SK-N-SH (cell line): ENCODE measurements at regions of chr10 and their contacts with region 1.

Region 1: GRCh38 chr10:127853868-127854768 is 38.6 kb downstream of the CLRN3 start:
- DNase-seq: peak; percentile 86
- H3K4me3 ChIP-seq: no peak overlapping the region
- H3K27ac ChIP-seq: no peak overlapping the region
- H3K4me1 ChIP-seq: no peaks in the 10 kb centered on the region; a peak in 1 of 4 replicates
- H3K27me3 ChIP-seq: no peaks in the 10 kb centered on the region
- CTCF ChIP-seq: peak; percentile 84
- EP300 ChIP-seq: no peak
- RAD21 ChIP-seq: peak; percentile 95

Region 2: DNA sequence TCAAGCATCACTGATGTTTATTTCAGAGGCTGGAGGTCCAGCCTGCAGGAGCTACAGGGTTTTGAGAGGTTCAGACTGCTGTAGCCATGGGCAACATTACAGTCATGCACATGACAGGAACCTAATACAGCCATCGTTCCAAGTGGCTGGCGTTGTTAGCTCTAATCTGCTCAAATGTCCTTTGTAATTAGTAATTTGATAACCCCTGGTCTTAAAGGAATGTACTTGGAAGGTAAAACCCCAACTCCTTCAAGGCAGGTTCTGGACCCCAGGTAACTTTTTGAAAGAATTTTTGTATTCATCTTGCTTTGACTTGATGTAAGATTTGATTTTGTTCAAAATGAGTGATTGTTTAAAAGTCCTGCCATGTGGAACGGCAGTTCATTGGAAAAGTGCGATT is 151.8 kb before region 1 on chr10:
- CTCF ChIA-PET with region 1: interaction called, 14 read pairs
- POLR2A ChIA-PET with region 1: no interaction called
- DNase-seq: no peak
- H3K4me3 ChIP-seq: no peak overlapping the region
- H3K27ac ChIP-seq: no peak overlapping the region
- H3K4me1 ChIP-seq: no peaks in the 10 kb centered on the region
- H3K27me3 ChIP-seq: no peaks in the 10 kb centered on the region
- CTCF ChIP-seq: no peak
- EP300 ChIP-seq: no peak
- RAD21 ChIP-seq: no peak

Region 3: GRCh38 chr10:127759276-127759675 is 94.8 kb before region 1 on chr10:
- CTCF ChIA-PET with region 1: interaction called, 11 read pairs
- POLR2A ChIA-PET with region 1: no interaction called
- DNase-seq: no peak
- H3K4me3 ChIP-seq: no peak overlapping the region
- H3K27ac ChIP-seq: no peak overlapping the region
- H3K4me1 ChIP-seq: no peaks in the 10 kb centered on the region
- H3K27me3 ChIP-seq: no peaks in the 10 kb centered on the region
- CTCF ChIP-seq: no peak
- EP300 ChIP-seq: no peak
- RAD21 ChIP-seq: no peak

Region 4: GRCh38 chr10:127836966-127837365 is 17.2 kb before region 1 on chr10:
- CTCF ChIA-PET with region 1: interaction called, 16 read pairs
- POLR2A ChIA-PET with region 1: no interaction called
- DNase-seq: no peak
- H3K4me3 ChIP-seq: no peak overlapping the region
- H3K27ac ChIP-seq: no peak overlapping the region
- H3K4me1 ChIP-seq: no peaks in the 10 kb centered on the region; a peak in 1 of 4 replicates
- H3K27me3 ChIP-seq: no peaks in the 10 kb centered on the region; the same call in 1 of the 2 replicates
- CTCF ChIP-seq: no peak
- EP300 ChIP-seq: no peak
- RAD21 ChIP-seq: no peak

Region 5: DNA sequence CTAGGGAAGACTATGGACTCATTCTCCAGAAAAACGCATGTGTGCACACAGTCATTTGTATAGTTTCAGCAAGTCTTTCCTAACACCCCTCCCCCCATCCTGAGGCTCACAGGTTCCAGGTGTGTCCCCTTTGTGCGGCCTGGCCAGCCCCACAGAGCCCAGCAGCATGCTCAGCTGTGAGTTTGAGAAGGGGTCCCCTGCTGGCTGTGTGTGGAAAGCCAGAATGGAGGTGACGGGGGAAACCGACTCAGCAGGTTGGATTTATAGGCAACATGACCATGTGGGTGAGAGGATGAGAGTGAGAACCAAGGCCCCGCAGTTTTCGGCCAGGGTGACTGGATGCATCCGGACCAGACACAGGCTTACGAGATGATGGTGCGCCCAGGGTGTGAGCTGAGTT is 62.7 kb after region 1 on chr10:
- CTCF ChIA-PET with region 1: no interaction called
- POLR2A ChIA-PET with region 1: no interaction called
- DNase-seq: peak; percentile 6
- H3K4me3 ChIP-seq: no peak overlapping the region
- H3K27ac ChIP-seq: no peak overlapping the region; a peak in 1 of 4 replicates
- H3K4me1 ChIP-seq: peaks cover 7 to 24% of the 10 kb centered on the region in 2 experiments; a peak in 3 of 4 replicates
- H3K27me3 ChIP-seq: no peaks in the 10 kb centered on the region
- CTCF ChIP-seq: no peak
- EP300 ChIP-seq: no peak
- RAD21 ChIP-seq: no peak

Region 6: GRCh38 chr10:128064108-128064969 is 210.2 kb after region 1 on chr10:
- CTCF ChIA-PET with region 1: interaction called, 17 read pairs
- POLR2A ChIA-PET with region 1: no interaction called
- DNase-seq: no peak
- H3K4me3 ChIP-seq: no peak overlapping the region
- H3K27ac ChIP-seq: no peak overlapping the region
- H3K4me1 ChIP-seq: peaks cover 0 to 3% of the 10 kb centered on the region in 2 experiments; a peak in 1 of 4 replicates
- H3K27me3 ChIP-seq: no peaks in the 10 kb centered on the region
- CTCF ChIP-seq: no peak
- EP300 ChIP-seq: no peak
- RAD21 ChIP-seq: no peak